ENCODE measurements at regions of chr3 and their contacts with region 1.

Region 1: DNA sequence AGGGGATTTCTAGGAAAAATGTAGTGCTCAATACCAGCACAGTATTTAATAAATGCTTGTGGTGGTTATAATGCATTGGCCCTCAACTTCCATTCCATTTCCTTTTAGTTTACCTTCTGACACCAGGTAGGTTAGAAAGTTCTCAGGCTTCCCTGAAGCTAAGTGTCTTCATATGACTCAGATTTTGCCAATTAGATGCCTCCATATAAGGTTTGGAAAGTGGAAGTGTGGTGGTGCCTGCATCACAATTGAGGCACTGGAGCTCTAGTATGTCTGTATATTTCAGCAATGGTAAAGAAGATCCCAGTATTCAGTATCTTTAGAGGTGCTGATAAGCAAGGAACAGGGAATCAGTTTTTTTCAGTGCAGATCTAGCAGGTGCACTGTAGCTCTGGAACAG is 18.3 kb downstream of the XRN1 start:
- DNase-seq: no peak
- ATAC-seq: no peak
- H3K4me3 ChIP-seq: no peak overlapping the region
- H3K4me3 Mint-ChIP-seq: no peak overlapping the region
- H3K27ac ChIP-seq: no peak overlapping the region
- H3K27ac Mint-ChIP-seq: no peak overlapping the region
- H3K4me1 ChIP-seq: no peaks in the 10 kb centered on the region
- H3K4me1 Mint-ChIP-seq: peaks cover 22% of the 10 kb centered on the region
- H3K27me3 ChIP-seq: no peaks in the 10 kb centered on the region
- H3K27me3 Mint-ChIP-seq: no peaks in the 10 kb centered on the region
- CTCF ChIP-seq: no peak

Region 2: GRCh38 chr3:142374687-142375086 is 54.9 kb before region 1 on chr3:
- CTCF ChIA-PET with region 1: no interaction called
- POLR2A ChIA-PET with region 1: no interaction called
- intact Hi-C with region 1: loop called in 1 of 2 experiments (anchors 5 kb)
- DNase-seq: no peak
- ATAC-seq: no peak
- H3K4me3 ChIP-seq: no peak overlapping the region
- H3K4me3 Mint-ChIP-seq: no peak overlapping the region
- H3K27ac ChIP-seq: no peak overlapping the region
- H3K27ac Mint-ChIP-seq: no peak overlapping the region
- H3K4me1 ChIP-seq: no peaks in the 10 kb centered on the region
- H3K4me1 Mint-ChIP-seq: no peaks in the 10 kb centered on the region
- H3K27me3 ChIP-seq: no peaks in the 10 kb centered on the region
- H3K27me3 Mint-ChIP-seq: no peaks in the 10 kb centered on the region
- CTCF ChIP-seq: no peak

Region 3: GRCh38 chr3:142489557-142490323 is 60.2 kb after region 1 on chr3:
- CTCF ChIA-PET with region 1: no interaction called
- POLR2A ChIA-PET with region 1: no interaction called
- intact Hi-C with region 1: no loop called
- DNase-seq: no peak
- ATAC-seq: no peak
- H3K4me3 ChIP-seq: no peak overlapping the region
- H3K4me3 Mint-ChIP-seq: no peak overlapping the region
- H3K27ac ChIP-seq: no peak overlapping the region
- H3K27ac Mint-ChIP-seq: no peak overlapping the region
- H3K4me1 ChIP-seq: no peaks in the 10 kb centered on the region
- H3K4me1 Mint-ChIP-seq: no peaks in the 10 kb centered on the region
- H3K27me3 ChIP-seq: no peaks in the 10 kb centered on the region
- H3K27me3 Mint-ChIP-seq: no peaks in the 10 kb centered on the region
- CTCF ChIP-seq: no peak